ENCODE measurements at regions of chr4 and their contacts with region 1.

Region 1: DNA sequence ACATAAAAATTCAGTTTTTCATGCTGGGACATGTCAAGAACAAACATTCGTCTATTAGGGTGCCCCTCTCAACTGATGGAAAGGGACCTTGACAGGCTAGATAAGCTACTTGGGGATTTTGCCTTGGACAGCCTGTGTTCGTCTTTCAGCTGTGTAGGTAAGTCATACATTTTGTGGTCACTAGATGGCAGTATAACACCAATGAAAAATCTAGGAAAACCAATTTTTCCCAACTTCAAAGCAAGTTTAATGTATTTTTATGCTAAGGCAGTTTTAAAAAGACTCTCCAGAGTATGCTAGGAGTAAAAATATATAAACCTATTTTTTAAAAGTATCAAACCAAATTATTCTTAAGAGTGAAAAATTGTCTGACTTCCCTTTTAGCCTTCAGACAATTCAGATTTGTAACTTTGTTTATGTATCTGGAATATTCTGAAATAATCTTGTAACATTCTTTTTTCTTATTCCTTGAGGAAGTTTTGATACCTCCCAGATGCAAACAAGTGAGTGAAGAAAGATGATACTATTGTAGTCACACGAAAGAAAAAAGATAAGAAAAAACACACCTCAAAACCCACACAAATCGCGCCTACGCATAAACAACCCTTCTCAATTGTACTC is 158.3 kb downstream of the CPE start:
- DNase-seq: no peak
- H3K4me3 Mint-ChIP-seq: no peak overlapping the region
- H3K27ac Mint-ChIP-seq: no peak overlapping the region
- H3K4me1 Mint-ChIP-seq: no peaks in the 10 kb centered on the region
- H3K27me3 Mint-ChIP-seq: no peaks in the 10 kb centered on the region

Region 2: DNA sequence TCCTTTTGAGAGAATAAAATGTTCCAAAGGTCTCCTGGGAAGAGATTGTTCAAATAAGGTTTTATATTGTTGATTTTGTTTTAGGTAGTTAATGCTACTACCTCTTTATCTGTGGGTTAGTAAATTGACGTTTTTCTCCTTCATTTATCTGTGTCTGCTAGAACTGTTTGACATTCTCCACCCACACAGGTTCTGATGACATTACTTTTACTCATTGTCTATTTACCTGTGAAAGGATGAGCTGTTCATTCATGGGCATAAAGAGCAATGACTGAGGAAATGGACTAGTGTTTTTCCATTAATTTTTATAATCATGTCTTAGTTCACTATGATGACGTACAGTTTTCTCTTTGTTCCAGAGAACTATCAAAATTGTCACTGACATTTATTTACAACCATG is 82.7 kb before region 1 on chr4:
- intact Hi-C with region 1: no loop called
- DNase-seq: no peak
- H3K4me3 Mint-ChIP-seq: no peak overlapping the region
- H3K27ac Mint-ChIP-seq: no peak overlapping the region
- H3K4me1 Mint-ChIP-seq: no peaks in the 10 kb centered on the region
- H3K27me3 Mint-ChIP-seq: peaks cover 7% of the 10 kb centered on the region

Region 3: DNA sequence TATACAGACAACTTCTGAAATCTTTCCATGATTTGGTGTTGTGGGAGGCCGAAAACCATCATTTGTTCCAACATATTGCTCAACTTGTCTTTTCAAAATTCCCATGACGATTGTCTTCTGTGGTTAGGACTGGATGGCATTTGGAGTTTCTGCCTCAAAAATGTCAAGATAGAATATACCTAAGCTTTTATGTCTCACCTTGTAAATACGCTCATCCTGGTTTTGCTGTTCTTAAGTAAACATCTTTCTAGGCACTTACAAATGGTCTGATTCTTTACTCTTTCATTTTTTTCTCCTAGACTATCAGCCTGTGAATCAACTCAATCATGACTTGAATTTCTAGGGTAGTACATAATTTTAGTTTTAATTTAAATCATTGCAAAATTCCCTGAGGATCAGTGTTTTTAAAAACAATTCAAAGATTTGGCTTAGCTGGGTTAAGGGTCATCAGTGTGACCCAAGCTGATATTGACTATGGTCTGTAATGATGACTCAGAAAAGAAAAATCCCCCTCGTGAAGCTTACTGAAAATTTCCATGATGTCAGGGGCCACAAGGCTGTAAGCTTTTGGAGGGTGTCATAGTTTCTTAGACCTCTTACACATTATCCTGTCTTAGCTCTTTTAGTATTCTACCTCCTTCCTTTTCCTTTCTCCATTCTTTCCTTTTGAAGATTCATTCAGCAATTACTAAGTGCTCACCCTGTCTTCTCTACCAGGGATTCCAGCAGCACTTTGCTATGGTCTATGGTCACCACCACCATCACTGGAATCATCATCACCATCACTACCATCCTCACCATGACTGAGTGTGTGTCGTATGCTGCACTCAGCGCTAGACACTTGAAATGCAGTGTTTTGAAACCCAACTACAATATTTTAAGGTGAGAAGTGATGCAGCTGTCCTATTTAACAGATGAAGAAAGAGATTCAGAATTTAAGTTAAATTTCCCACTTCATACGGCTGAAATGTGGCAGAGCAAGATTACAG is 33.9 kb before region 1 on chr4:
- intact Hi-C with region 1: no loop called
- DNase-seq: no peak
- H3K4me3 Mint-ChIP-seq: no peak overlapping the region
- H3K27ac Mint-ChIP-seq: no peak overlapping the region
- H3K4me1 Mint-ChIP-seq: peaks cover 2% of the 10 kb centered on the region
- H3K27me3 Mint-ChIP-seq: no peaks in the 10 kb centered on the region

Region 4: DNA sequence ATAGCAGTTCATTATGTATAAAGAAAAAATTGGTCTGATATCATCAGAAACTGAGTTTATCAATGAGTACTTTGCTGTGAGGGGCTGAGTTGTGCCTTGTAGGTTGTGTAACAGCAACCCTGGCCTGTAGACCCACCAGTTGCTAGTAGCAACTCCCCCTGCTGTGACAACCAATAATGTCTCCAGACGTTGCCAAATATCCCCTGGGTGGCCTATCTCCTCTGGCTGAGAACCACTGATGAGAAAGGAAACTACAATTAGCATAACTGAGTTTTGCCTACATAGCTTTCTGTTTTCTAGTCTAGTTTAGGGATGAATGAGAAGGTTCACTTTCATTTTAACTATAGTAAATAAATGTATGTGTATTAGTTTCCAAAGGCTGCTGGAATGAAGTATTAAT is 75.8 kb after region 1 on chr4:
- intact Hi-C with region 1: loop called (anchors 5 kb)
- DNase-seq: peak; percentile 11
- H3K4me3 Mint-ChIP-seq: no peak overlapping the region
- H3K27ac Mint-ChIP-seq: no peak overlapping the region
- H3K4me1 Mint-ChIP-seq: peaks cover 12% of the 10 kb centered on the region
- H3K27me3 Mint-ChIP-seq: no peaks in the 10 kb centered on the region

Region 5: GRCh38 chr4:165700855-165701254 is 163.7 kb after region 1 on chr4:
- intact Hi-C with region 1: loop called (anchors 5 kb)
- DNase-seq: no peak
- H3K4me3 Mint-ChIP-seq: no peak overlapping the region
- H3K27ac Mint-ChIP-seq: no peak overlapping the region
- H3K4me1 Mint-ChIP-seq: no peaks in the 10 kb centered on the region
- H3K27me3 Mint-ChIP-seq: no peaks in the 10 kb centered on the region

Region 6: DNA sequence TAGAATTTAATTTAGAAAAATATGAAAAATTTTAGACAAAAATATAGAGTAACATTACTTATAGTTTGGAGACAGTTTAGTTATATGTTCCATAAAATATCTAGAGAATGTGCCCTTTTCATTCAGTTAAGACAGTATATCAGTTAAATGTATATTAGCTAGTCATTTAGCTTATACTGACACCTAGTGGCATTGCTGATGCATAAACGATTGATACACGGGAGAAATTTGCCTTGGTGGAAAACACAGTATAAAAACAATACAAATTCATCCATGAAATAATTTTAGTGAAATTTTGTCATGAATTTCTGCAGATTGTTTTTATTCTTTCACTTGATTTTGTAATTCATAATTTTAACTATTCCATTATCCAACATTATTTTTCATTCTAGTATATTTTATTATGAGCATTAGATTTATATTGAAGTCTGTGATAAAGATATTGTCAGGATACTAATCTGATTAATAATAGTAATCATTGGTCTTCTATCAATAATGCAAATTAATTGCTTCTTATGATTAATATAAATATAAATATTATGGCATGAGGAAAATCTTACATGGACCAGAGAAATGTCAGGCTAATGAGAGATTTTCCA is 554.9 kb after region 1 on chr4:
- intact Hi-C with region 1: loop called (anchors 1 kb)
- DNase-seq: no peak
- H3K4me3 Mint-ChIP-seq: no peak overlapping the region
- H3K27ac Mint-ChIP-seq: no peak overlapping the region
- H3K4me1 Mint-ChIP-seq: no peaks in the 10 kb centered on the region
- H3K27me3 Mint-ChIP-seq: no peaks in the 10 kb centered on the region